ENCODE measurements at regions of chr1 and their contacts with region 1.

Region 1: DNA sequence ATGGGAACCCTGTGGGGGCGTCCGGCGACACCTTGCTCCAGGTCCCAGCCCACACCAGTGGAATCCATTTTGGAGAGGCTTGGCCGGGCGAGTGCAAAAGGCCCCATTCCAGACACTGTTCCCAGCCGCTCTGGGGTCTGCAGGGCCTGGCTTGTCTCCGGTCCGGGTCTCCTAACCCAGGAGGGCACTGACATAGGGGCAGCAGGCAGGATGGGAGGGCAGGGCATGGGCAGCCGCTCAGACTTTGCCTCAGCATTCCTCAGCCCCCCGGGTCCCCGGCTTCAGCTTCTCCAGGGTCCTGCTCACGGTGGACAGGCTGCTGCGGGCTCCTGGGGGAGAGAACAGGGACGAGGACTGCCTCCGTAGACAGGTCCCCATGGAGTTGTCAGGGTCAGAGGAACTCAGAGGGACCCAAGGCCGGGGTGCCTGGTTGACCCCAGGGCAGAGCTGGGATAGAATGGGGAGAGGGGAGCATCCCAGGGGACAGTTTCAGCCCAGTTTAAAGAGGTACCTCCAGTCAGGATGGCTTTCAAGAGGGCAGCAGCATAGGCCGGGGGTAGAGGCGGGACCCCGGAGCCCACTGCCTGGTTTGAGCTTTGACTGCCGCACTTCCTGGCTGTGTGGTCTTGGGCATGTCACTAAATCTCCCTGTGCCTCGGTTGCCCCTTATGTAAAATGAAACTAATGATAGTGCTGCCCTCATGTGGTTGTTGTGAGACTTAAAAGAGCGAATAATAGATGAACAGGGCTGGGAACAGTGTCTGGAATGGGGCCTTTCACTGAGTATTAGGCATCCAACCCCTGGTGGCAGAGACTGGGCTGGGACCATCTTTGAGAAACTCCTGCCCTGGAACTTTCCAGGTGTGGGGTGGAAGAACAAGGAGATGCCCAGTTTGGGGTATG is 3.7 kb downstream of the KNCN start:
- DNase-seq: no peak
- ATAC-seq: peak; percentile 25
- H3K4me3 Mint-ChIP-seq: no peak overlapping the region
- H3K27ac Mint-ChIP-seq: peak overlapping the region; percentile 70
- H3K4me1 Mint-ChIP-seq: peaks cover 21% of the 10 kb centered on the region
- H3K27me3 Mint-ChIP-seq: peaks cover 40% of the 10 kb centered on the region

Region 2: GRCh38 chr1:46453449-46453848 is 94.3 kb before region 1 on chr1:
- CTCF ChIA-PET with region 1: no interaction called
- DNase-seq: no peak
- ATAC-seq: no peak
- H3K4me3 Mint-ChIP-seq: no peak overlapping the region
- H3K27ac Mint-ChIP-seq: no peak overlapping the region
- H3K4me1 Mint-ChIP-seq: peaks cover 4% of the 10 kb centered on the region
- H3K27me3 Mint-ChIP-seq: peaks cover 41% of the 10 kb centered on the region

Region 3: GRCh38 chr1:46533179-46533864 is 14.4 kb before region 1 on chr1:
- CTCF ChIA-PET with region 1: interaction called, 74 read pairs
- DNase-seq: peak; percentile 56
- ATAC-seq: peak; percentile 65
- H3K4me3 Mint-ChIP-seq: peak overlapping the region; percentile 68
- H3K27ac Mint-ChIP-seq: peak overlapping the region; percentile 7
- H3K4me1 Mint-ChIP-seq: peaks cover 33% of the 10 kb centered on the region
- H3K27me3 Mint-ChIP-seq: peaks cover 44% of the 10 kb centered on the region

Region 4: DNA sequence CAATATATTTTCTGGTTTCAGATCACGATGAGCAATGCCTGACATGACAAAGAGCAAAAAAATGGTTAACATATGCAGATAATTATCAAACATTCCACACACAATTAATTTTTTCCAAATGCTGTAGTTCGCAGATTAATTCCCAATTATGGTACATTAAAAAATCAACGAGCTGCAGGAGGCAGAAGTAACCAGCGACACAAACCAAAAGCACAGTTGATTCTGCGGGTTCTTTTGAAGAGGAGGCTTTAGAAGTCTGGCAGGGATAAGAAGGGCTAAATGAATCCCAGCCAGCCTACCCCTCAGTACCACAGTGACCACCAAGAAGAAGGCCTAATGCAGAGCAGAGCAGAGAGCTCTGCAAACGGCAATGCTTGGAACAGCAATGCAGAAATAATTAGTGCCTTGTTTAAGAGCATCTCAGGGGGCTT is 20.7 kb after region 1 on chr1:
- CTCF ChIA-PET with region 1: no interaction called
- DNase-seq: no peak
- ATAC-seq: no peak
- H3K4me3 Mint-ChIP-seq: no peak overlapping the region
- H3K27ac Mint-ChIP-seq: no peak overlapping the region
- H3K4me1 Mint-ChIP-seq: peaks cover 3% of the 10 kb centered on the region
- H3K27me3 Mint-ChIP-seq: no peaks in the 10 kb centered on the region

Region 5: GRCh38 chr1:46581681-46582455 is 34.1 kb after region 1 on chr1:
- CTCF ChIA-PET with region 1: interaction called, 18 read pairs
- DNase-seq: peak; percentile 77
- ATAC-seq: peak; percentile 93
- H3K4me3 Mint-ChIP-seq: peak overlapping the region; percentile 34
- H3K27ac Mint-ChIP-seq: peak overlapping the region; percentile 94
- H3K4me1 Mint-ChIP-seq: peaks cover 60% of the 10 kb centered on the region
- H3K27me3 Mint-ChIP-seq: no peaks in the 10 kb centered on the region

Measured in activated CD8-positive, alpha-beta memory T cell treated with anti-CD3 and anti-CD28 coated beads, Interleukin-2, amount 10 ng/mL, durations not matched to agents 7 days and 5 days (primary cell).